CD4-positive, alpha-beta memory T cell (primary cell): ENCODE measurements at regions of chr9 and their contacts with region 1.

Region 1: GRCh38 chr9:120842690-120843499 is at the start of gene PSMD5:
- DNase-seq: peak; percentile 93 to 99 (median 99)
- H3K4me3 ChIP-seq: peak within 1 kb of the TSS; percentile 78 to 84
- H3K4me3 Mint-ChIP-seq: peak within 1 kb of the TSS; percentile 92 to 98 (median 96)
- H3K27ac ChIP-seq: peak within 1 kb of the TSS; percentile 98
- H3K27ac Mint-ChIP-seq: peak within 1 kb of the TSS; percentile 96 to 98 (median 98)
- H3K4me1 ChIP-seq: peaks cover 75% of the 10 kb centered on the region
- H3K4me1 Mint-ChIP-seq: peaks cover 62 to 84% (median 73%) of the 10 kb centered on the region in 4 donors
- H3K27me3 ChIP-seq: no peaks in the 10 kb centered on the region
- H3K27me3 Mint-ChIP-seq: no peaks in the 10 kb centered on the region
- total RNA-seq, gene PSMD5: 46.4 to 59.0 TPM

Region 2: GRCh38 chr9:120692901-120693699 is 149.8 kb before region 1 on chr9:
- CTCF ChIA-PET with region 1: no interaction called
- POLR2A ChIA-PET with region 1: no interaction called
- intact Hi-C with region 1: no loop called
- DNase-seq: no peak
- H3K4me3 ChIP-seq: no peak overlapping the region
- H3K4me3 Mint-ChIP-seq: no peak overlapping the region
- H3K27ac ChIP-seq: no peak overlapping the region
- H3K27ac Mint-ChIP-seq: peak overlapping the region in 1 of 7 donors; percentile 1
- H3K4me1 ChIP-seq: peaks cover 12% of the 10 kb centered on the region
- H3K4me1 Mint-ChIP-seq: peaks cover 18 to 35% (median 26%) of the 10 kb centered on the region in 4 donors
- H3K27me3 ChIP-seq: no peaks in the 10 kb centered on the region
- H3K27me3 Mint-ChIP-seq: no peaks in the 10 kb centered on the region

Region 3: DNA sequence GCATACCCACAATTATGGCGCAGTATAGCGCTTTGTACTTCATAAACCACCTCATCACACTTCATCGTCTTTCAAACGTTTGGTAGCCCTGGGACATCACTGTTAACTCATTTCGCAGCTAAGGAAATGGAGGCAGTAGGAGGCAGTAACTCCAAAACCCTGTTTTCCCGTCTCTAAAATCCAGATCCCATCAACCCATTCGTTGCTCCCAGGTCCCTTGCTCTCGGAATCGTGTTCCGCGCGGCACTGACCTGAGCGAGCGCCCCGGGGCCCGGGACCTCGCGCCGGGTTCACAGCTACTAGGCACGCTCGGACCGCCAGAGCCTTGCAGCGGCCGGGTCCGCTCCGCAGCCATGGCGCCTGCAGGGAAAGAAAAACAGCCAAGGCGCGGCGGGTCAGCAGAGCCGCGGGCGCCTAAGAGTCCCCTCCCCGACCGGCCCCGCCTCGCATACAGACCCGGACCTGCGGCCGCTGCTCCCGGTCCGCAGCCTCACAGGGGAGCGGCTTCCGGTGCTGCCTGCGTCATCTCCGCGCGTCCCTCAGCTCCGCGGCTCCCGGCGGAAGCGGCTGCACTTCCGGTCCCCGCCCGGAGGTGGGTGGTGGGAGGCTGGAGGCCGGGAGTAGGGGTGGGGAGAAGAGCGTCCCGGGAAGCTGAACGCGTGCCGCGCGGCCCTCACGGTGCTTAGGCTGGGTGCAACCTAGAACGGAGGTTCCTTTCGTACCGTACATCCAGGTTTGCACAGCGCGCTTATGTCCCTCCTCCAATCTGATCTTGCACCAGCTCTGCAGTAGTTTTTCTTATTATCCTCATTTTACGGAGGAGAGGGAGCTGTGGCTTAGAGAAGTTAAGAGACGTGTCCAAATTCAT is 49.8 kb before region 1 on chr9 and contains the start of gene FBXW2:
- CTCF ChIA-PET with region 1: interaction called, 5 read pairs
- POLR2A ChIA-PET with region 1: interaction called, 42 read pairs
- intact Hi-C with region 1: loop called (anchors 1 kb)
- DNase-seq: peak; percentile 74 to 83 (median 78)
- H3K4me3 ChIP-seq: peak within 1 kb of the TSS; percentile 82 to 94
- H3K4me3 Mint-ChIP-seq: peak within 1 kb of the TSS; percentile 89 to 98 (median 92)
- H3K27ac ChIP-seq: peak within 1 kb of the TSS; percentile 77
- H3K27ac Mint-ChIP-seq: peak within 1 kb of the TSS; percentile 90 to 97 (median 93)
- H3K4me1 ChIP-seq: peaks cover 58% of the 10 kb centered on the region
- H3K4me1 Mint-ChIP-seq: peaks cover 39 to 62% (median 50%) of the 10 kb centered on the region in 4 donors
- H3K27me3 ChIP-seq: no peaks in the 10 kb centered on the region
- H3K27me3 Mint-ChIP-seq: no peaks in the 10 kb centered on the region
- total RNA-seq, gene FBXW2: 73.7 to 77.8 TPM

Region 4: DNA sequence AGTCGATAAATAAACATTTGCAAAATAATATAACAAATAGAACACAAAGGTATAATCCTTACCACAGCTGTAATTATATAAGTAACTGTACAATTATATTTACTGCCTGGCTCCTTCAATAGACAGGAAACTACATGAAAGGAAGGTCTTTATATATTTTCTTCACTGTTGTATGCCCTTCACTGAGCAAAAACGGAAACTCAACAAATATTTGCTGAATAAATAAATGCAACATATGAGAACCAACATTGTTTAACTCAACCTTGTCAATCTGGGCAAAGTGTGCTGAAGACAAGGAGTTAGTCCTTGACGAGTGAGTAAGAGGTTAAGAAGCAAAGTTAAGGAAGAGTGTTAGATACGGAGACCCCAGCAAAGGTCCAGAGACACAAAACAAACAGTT is 22.8 kb before region 1 on chr9:
- CTCF ChIA-PET with region 1: no interaction called
- POLR2A ChIA-PET with region 1: no interaction called
- intact Hi-C with region 1: no loop called
- DNase-seq: no peak
- H3K4me3 ChIP-seq: no peak overlapping the region
- H3K4me3 Mint-ChIP-seq: no peak overlapping the region
- H3K27ac ChIP-seq: no peak overlapping the region
- H3K27ac Mint-ChIP-seq: peak overlapping the region in 1 of 7 donors; percentile 19
- H3K4me1 ChIP-seq: no peaks in the 10 kb centered on the region
- H3K4me1 Mint-ChIP-seq: peaks cover 0 to 2% (median 0%) of the 10 kb centered on the region in 4 donors
- H3K27me3 ChIP-seq: no peaks in the 10 kb centered on the region
- H3K27me3 Mint-ChIP-seq: no peaks in the 10 kb centered on the region

Region 5: GRCh38 chr9:120892748-120893610 is 50.1 kb after region 1 on chr9:
- CTCF ChIA-PET with region 1: interaction called, 6 read pairs
- POLR2A ChIA-PET with region 1: interaction called, 49 read pairs
- intact Hi-C with region 1: loop called (anchors 2 kb)
- DNase-seq: peak; percentile 69 to 93 (median 75)
- H3K4me3 ChIP-seq: peak overlapping the region in 1 of 2 donors; percentile 41
- H3K4me3 Mint-ChIP-seq: peak overlapping the region; percentile 8 to 82 (median 68)
- H3K27ac ChIP-seq: peak overlapping the region; percentile 76
- H3K27ac Mint-ChIP-seq: peak overlapping the region; percentile 86 to 100 (median 98)
- H3K4me1 ChIP-seq: peaks cover 95% of the 10 kb centered on the region
- H3K4me1 Mint-ChIP-seq: peaks cover 49 to 92% (median 71%) of the 10 kb centered on the region in 4 donors
- H3K27me3 ChIP-seq: no peaks in the 10 kb centered on the region
- H3K27me3 Mint-ChIP-seq: no peaks in the 10 kb centered on the region

Region 6: GRCh38 chr9:120928483-120929228 is 85.8 kb after region 1 on chr9:
- CTCF ChIA-PET with region 1: interaction called, 4 read pairs
- POLR2A ChIA-PET with region 1: interaction called, 149 read pairs
- intact Hi-C with region 1: loop called (anchors 2 kb)
- DNase-seq: peak; percentile 75 to 82 (median 79)
- H3K4me3 ChIP-seq: peak overlapping the region; percentile 77 to 88
- H3K4me3 Mint-ChIP-seq: peak overlapping the region; percentile 83 to 97 (median 95)
- H3K27ac ChIP-seq: peak overlapping the region; percentile 99
- H3K27ac Mint-ChIP-seq: peak overlapping the region; percentile 91 to 99 (median 98)
- H3K4me1 ChIP-seq: peaks cover 84% of the 10 kb centered on the region
- H3K4me1 Mint-ChIP-seq: peaks cover 52 to 92% (median 69%) of the 10 kb centered on the region in 4 donors
- H3K27me3 ChIP-seq: no peaks in the 10 kb centered on the region
- H3K27me3 Mint-ChIP-seq: no peaks in the 10 kb centered on the region

Region 7: GRCh38 chr9:121074635-121075385 is 231.9 kb after region 1 on chr9 and contains the start of gene CNTRL:
- CTCF ChIA-PET with region 1: interaction called, 3 read pairs
- POLR2A ChIA-PET with region 1: interaction called, 3 read pairs
- intact Hi-C with region 1: loop called (anchors 1 kb)
- DNase-seq: peak; percentile 81 to 92 (median 84)
- H3K4me3 ChIP-seq: peak within 1 kb of the TSS; percentile 72 to 87
- H3K4me3 Mint-ChIP-seq: peak within 1 kb of the TSS; percentile 82 to 100 (median 98)
- H3K27ac ChIP-seq: peak within 1 kb of the TSS; percentile 90
- H3K27ac Mint-ChIP-seq: peak within 1 kb of the TSS; percentile 78 to 99 (median 98)
- H3K4me1 ChIP-seq: peaks cover 37% of the 10 kb centered on the region
- H3K4me1 Mint-ChIP-seq: peaks cover 34 to 66% (median 53%) of the 10 kb centered on the region in 4 donors
- H3K27me3 ChIP-seq: no peaks in the 10 kb centered on the region
- H3K27me3 Mint-ChIP-seq: no peaks in the 10 kb centered on the region
- total RNA-seq, gene CNTRL: 119 to 122 TPM